Left lung (tissue), 14 donors: ENCODE measurements at regions of chr5 and their contacts with region 1.

Region 1: DNA sequence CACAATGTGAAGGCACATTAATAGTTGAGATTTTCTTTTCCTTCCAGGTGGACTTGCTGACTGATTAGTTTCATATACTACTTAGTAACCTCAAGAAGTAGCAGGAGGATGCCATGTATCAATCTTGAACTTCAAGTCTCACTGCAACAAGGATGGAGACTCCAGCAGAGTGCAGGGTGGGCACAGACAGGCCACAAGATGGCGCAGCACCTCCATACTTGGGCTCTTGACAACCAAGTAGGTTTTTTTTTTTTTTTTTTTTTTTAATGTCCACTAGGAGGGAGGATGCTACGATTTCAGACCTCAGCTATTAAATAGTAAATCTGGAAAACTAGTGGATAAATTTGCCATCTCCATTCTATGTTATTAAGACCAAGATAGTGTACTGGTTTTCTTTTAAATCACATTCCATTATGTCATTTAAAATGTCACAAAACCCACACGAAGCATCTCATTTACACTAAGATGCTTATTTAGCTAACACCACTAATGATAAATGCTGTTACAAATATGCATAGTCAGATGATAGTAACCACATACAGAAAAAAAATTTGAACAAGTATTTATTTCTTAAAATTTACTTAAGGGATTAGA is 58.6 kb downstream of the IL6ST start:
- DNase-seq: peak; percentile 67 to 87 (median 81)
- ATAC-seq: peak; percentile 66
- H3K4me3 ChIP-seq: no peak overlapping the region
- H3K27ac ChIP-seq: no peak overlapping the region
- H3K4me1 ChIP-seq: peaks cover 8 to 10% of the 10 kb centered on the region in 2 donors
- H3K27me3 ChIP-seq: no peaks in the 10 kb centered on the region
- CTCF ChIP-seq: peak; percentile 85 to 86

Region 2: GRCh38 chr5:55847837-55848236 is 88.4 kb before region 1 on chr5:
- intact Hi-C with region 1: no loop called
- DNase-seq: no peak
- ATAC-seq: no peak
- H3K4me3 ChIP-seq: no peak overlapping the region
- H3K27ac ChIP-seq: no peak overlapping the region
- H3K4me1 ChIP-seq: no peaks in the 10 kb centered on the region
- H3K27me3 ChIP-seq: no peaks in the 10 kb centered on the region
- CTCF ChIP-seq: no peak

Region 3: DNA sequence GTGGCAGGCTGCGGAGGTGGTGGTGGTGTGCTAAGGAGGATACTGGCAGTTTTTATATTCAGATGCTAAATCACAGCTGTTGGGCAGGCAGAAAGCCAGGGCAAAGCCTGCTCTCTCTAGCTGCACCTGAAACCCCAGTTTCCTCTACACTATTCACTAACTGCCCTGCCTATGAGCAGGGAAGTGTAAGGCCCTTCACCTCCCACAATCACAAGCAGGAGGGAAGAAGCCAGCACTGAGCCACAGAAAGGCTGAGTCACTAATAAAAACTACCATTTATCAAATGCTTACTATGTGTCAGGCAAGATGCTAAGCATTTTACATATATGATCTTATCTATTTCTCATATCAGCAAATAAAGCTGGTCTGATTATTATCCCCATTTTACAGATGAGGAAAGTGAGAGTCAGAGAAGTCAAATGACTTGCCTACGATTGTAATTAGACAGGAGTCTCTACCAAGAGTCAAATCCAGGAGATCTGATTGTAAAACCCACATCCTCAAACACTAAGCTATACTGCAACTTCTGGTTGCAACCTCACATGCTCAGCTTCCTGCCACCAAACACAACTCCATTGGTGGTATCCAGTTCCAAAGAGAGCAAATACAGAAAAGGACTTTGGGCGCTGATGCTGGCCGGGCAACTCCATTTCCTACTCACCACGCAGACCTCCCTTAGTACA is 76.2 kb after region 1 on chr5:
- intact Hi-C with region 1: no loop called
- DNase-seq: peak in 1 of 4 donors; percentile 33
- ATAC-seq: peak; percentile 65
- H3K4me3 ChIP-seq: no peak overlapping the region
- H3K27ac ChIP-seq: peak overlapping the region; percentile 19 to 37
- H3K4me1 ChIP-seq: peaks cover 0 to 18% of the 10 kb centered on the region in 2 donors
- H3K27me3 ChIP-seq: no peaks in the 10 kb centered on the region
- CTCF ChIP-seq: no peak

Region 4: GRCh38 chr5:56200856-56201666 is 264.9 kb after region 1 on chr5:
- intact Hi-C with region 1: loop called in 1 of 2 experiments (anchors 10 kb)
- DNase-seq: peak in 3 of 4 donors; percentile 49 to 73 (median 54)
- ATAC-seq: peak; percentile 100
- H3K4me3 ChIP-seq: no peak overlapping the region
- H3K27ac ChIP-seq: no peak overlapping the region
- H3K4me1 ChIP-seq: peaks cover 0 to 19% of the 10 kb centered on the region in 2 donors
- H3K27me3 ChIP-seq: no peaks in the 10 kb centered on the region
- CTCF ChIP-seq: peak; percentile 60 to 78